ENCODE measurements at regions of chrX and their contacts with region 1.

Region 1: DNA sequence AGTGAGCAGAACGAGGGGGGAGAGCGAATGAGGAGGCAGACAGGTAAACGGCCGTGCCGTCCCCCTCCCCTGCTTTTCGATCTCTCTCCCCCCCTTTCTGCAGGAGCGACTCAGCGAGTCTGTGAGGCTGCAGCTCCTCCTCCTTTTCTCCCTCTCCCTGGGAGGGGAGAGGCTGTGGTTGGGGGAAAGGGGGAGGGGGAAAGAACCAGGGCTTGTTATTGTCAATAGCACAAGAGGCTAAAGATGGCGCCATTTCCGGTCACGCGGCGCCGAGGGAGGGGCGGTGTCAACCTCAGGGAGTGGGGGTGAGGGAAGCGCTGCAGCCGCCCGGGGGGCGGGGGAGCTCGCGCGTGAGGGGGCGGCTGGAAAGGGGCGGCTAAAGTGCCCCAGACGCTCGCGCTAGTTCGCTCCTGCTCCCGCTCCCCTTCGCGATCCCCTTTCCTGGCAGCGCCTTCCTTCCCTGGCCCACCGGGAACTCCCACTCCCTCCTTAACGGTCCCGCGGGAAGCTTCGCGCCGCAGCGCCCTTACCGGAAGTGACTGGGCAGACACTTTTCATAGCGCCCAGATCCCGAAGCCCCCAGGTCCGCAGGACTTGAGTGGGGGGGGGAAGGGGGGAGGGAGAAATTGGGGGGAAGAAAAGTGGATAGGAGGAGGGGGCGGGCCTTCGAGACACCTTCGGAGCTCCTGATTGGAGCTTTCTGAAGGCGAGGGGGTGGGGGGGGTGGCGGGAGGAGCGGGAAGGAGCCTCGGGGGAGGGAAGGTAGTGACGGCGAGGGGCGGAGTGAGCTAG is at the start of gene CUL4B:
- DNase-seq: peak; percentile 79 to 96
- ATAC-seq: peak; percentile 89 to 90
- H3K4me3 ChIP-seq: peak within 1 kb of the TSS; percentile 88
- H3K27ac ChIP-seq: peak within 1 kb of the TSS; percentile 99 to 100
- H3K4me1 ChIP-seq: peaks cover 27% of the 10 kb centered on the region
- CTCF ChIP-seq: no peak
- EP300 ChIP-seq: no peak
- POLR2A ChIP-seq: peak; percentile 44; the same call in 1 of the 2 replicates
- RAD21 ChIP-seq: no peak
- polyA plus RNA-seq, gene CUL4B: 47.5 and 55.0 TPM in 2 replicates

Region 2: DNA sequence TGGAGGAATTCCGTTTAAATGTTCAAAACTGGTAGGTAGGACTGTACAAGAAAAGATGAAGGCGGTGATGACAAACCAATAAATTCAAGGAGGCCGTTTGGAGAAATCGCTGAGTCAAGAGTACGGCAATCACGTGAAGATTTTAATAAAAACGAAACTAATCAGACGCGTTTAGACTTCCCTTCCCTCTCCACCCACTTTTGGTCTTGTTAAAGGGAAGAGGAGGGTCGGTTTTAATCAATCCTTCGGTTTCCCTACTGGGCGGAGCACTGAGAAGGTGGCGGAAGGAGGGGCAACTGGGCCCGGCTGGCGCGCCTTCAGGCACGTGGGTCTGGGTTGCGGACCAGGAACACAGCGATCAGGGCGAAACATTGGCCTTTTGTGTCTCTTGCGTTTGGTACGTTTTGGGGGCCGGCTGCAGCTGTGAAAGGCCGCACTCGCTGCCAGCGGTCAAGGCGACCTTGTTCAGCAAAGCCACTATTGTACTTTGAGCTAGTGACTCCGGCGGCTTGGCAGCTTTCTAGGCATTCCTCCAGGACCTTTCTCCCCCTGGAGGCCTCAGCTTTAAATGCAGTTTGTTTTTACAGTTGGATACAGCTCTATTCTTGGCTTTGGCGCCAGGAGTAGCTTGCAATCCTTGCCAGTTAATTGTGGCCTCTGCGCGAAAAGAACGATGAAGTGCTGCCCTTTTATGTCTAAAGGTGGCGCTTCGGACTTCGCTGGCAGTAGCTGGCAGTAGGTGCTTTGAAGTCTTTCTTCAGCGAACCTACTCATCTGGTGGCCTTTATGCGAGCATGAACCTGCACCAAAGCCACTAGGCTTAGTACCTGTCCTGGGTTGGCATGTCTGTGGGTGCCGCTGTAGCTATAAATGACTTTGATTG is 75.2 kb before region 1 on chrX:
- CTCF ChIA-PET with region 1: no interaction called
- POLR2A ChIA-PET with region 1: interaction called, 13 read pairs
- DNase-seq: peak; percentile 70 to 92
- ATAC-seq: peak; percentile 96 to 97
- H3K4me3 ChIP-seq: peak overlapping the region; percentile 42
- H3K27ac ChIP-seq: peak overlapping the region; percentile 84 to 89
- H3K4me1 ChIP-seq: peaks cover 7% of the 10 kb centered on the region; the same call in 1 of the 3 replicates
- CTCF ChIP-seq: no peak; the same call in none of the 3 replicates
- EP300 ChIP-seq: no peak
- POLR2A ChIP-seq: peak; percentile 39
- RAD21 ChIP-seq: peak in 1 of 2 experiments; percentile 27; a peak in 2 of 5 replicates

Region 3: DNA sequence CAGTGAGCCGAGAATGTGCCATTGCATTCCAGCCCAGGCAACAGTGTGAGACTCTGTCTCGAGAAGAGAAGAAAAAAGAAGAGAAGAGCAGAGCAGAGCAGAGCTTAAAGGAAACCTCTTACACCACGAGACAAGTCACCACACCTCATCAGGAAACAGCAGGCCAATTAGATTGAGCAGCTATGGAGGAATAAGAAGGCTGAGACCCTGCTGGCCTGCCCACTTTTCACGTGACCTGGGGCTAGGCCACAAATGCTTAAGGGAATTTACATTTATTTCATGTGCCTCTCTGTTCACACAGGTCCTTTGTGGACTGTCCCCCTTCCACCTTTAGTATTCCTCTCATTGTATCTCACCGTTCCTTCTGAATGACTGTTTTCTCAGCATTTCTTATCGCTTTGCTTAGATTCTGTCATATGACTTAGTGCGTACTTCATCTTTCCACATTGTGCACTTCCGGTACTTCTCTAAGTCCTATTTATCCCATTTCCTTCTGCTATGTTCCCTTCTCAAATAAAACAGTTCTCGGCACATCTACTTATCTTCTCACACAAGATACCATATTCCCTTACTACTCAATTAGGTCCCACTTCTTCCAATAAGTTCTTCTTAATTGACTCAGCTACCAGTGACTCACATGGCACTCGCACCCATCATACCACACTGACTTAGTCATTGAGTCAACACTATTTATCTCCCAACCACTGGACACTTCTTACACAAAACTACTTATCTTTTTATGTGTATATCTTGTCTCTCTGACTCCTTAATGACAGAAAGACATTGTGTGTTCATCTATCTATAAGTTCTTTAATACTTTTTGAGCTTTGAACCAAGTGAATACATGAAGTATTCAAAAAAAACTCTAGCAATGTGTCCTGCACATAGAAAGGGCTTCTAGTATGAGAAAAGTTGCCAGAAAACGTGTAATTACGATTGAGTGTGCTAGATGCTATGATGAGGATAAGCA is 11.3 kb before region 1 on chrX:
- CTCF ChIA-PET with region 1: interaction called, 6 read pairs
- POLR2A ChIA-PET with region 1: interaction called, 27 read pairs
- DNase-seq: peak; percentile 73 to 88
- ATAC-seq: peak; percentile 97 to 100
- H3K4me3 ChIP-seq: peak overlapping the region; percentile 25; the same call in 1 of the 3 replicates
- H3K27ac ChIP-seq: peak overlapping the region; percentile 92 to 94
- H3K4me1 ChIP-seq: peaks cover 40% of the 10 kb centered on the region
- CTCF ChIP-seq: no peak
- EP300 ChIP-seq: no peak; a peak in 1 of 5 replicates
- POLR2A ChIP-seq: no peak
- RAD21 ChIP-seq: peak in 1 of 2 experiments; percentile 12; a peak in 1 of 5 replicates

Region 4: GRCh38 chrX:120603707-120604360 is 42.8 kb after region 1 on chrX and contains the start of gene MCTS1:
- CTCF ChIA-PET with region 1: no interaction called
- POLR2A ChIA-PET with region 1: interaction called, 61 read pairs
- DNase-seq: peak; percentile 76 to 98
- ATAC-seq: peak; percentile 98 to 99
- H3K4me3 ChIP-seq: peak within 1 kb of the TSS; percentile 92
- H3K27ac ChIP-seq: peak within 1 kb of the TSS; percentile 93 to 98
- H3K4me1 ChIP-seq: peaks cover 9% of the 10 kb centered on the region; the same call in 2 of the 3 replicates
- CTCF ChIP-seq: no peak
- EP300 ChIP-seq: no peak
- POLR2A ChIP-seq: peak; percentile 34; the same call in 1 of the 2 replicates
- RAD21 ChIP-seq: peak in 1 of 2 experiments; percentile 8; a peak in 1 of 5 replicates
- polyA plus RNA-seq, gene MCTS1: 133 and 163 TPM in 2 replicates

Region 5: DNA sequence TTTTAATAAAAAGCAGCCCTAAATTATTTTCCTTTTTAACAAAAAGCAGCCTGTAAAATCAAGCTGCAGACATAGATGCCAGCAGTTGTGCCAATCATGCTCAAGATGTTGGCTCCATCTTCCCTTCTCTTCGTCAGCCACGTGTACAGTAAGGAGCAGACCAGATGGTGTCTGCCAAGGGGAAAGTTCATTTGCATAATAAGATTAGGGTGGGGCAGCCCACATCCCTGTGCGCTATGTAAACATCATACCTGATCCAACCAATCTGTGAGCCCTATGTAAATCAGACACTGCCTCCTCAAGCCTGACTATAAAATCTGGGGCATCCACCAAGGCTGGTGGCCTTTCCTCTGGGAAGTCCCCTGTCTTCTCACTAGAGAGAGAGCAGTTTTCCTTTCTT is 92.0 kb after region 1 on chrX:
- CTCF ChIA-PET with region 1: no interaction called
- POLR2A ChIA-PET with region 1: no interaction called
- DNase-seq: no peak
- ATAC-seq: no peak
- H3K4me3 ChIP-seq: no peak overlapping the region
- H3K27ac ChIP-seq: no peak overlapping the region
- H3K4me1 ChIP-seq: no peaks in the 10 kb centered on the region; the same call in 2 of the 3 replicates
- CTCF ChIP-seq: no peak
- EP300 ChIP-seq: no peak
- POLR2A ChIP-seq: no peak
- RAD21 ChIP-seq: no peak

Region 6: GRCh38 chrX:120735966-120736365 is 174.9 kb after region 1 on chrX:
- CTCF ChIA-PET with region 1: no interaction called
- POLR2A ChIA-PET with region 1: interaction called, 11 read pairs
- DNase-seq: no peak
- ATAC-seq: no peak
- H3K4me3 ChIP-seq: no peak overlapping the region
- H3K27ac ChIP-seq: peak overlapping the region; percentile 83 to 88
- H3K4me1 ChIP-seq: peaks cover 34% of the 10 kb centered on the region
- CTCF ChIP-seq: no peak
- EP300 ChIP-seq: no peak
- POLR2A ChIP-seq: no peak
- RAD21 ChIP-seq: no peak

Region 7: DNA sequence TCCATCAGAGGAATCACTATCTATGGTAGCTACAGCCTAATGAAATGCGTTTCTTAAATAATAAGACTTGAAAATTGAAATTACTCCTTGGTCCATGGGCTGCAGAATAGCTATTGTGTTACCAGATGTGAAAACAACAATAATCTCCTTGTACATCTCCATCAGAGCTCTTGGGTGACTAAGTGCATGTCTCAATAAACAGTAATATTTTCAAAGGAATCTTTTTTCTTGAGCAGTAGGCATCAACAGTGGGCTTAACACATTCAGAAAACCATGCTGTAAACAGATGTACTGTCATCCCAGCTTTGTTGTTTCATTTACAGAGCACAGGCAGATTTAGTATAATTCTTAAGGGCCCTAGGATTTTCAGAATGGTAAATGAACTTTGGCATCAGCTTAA is 553.7 kb after region 1 on chrX:
- CTCF ChIA-PET with region 1: no interaction called
- POLR2A ChIA-PET with region 1: no interaction called
- DNase-seq: no peak
- ATAC-seq: no peak
- H3K4me3 ChIP-seq: no peak overlapping the region
- H3K27ac ChIP-seq: no peak overlapping the region
- H3K4me1 ChIP-seq: no peaks in the 10 kb centered on the region
- CTCF ChIP-seq: no peak
- EP300 ChIP-seq: no peak
- POLR2A ChIP-seq: no peak
- RAD21 ChIP-seq: no peak